Heart left ventricle (tissue), 16 donors: ENCODE measurements at regions of chr5 and their contacts with region 1.

Region 1: DNA sequence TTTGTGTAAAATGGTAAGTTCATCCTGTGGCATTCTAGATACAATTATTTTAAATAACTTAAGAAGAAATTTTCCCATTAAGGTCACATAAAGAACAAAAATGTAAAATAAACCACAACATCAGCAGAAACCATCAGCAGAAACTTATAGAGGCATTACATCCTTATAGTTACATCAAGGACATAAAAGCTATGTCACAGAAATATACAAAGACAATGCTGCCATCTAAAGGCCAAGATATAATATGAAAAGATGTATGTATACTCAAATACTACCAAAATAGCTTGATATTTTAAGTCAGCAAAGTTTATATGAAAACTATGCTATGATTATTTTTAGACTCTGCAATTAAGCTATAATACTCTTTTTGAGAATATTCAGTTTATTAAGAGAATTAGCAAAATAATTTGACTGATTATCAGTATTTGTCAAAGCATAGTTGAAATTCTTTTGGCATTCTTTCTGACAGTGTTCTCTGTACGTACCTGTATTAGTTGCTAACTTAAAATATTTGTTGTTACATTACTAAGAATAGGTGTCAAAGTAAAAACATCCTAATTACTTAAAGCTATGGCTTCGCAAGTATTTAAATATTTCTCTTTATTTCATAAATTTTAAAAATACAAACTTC is 36.2 kb downstream of the FBXL17 start:
- DNase-seq: no peak
- ATAC-seq: no peak
- H3K4me3 ChIP-seq: no peak overlapping the region
- H3K27ac ChIP-seq: no peak overlapping the region
- H3K4me1 ChIP-seq: peaks cover 0 to 7% (median 0%) of the 10 kb centered on the region in 12 donors
- H3K27me3 ChIP-seq: no peaks in the 10 kb centered on the region
- CTCF ChIP-seq: peak in 11 of 12 donors; percentile 8 to 56 (median 44)
- POLR2A ChIP-seq: no peak

Region 2: DNA sequence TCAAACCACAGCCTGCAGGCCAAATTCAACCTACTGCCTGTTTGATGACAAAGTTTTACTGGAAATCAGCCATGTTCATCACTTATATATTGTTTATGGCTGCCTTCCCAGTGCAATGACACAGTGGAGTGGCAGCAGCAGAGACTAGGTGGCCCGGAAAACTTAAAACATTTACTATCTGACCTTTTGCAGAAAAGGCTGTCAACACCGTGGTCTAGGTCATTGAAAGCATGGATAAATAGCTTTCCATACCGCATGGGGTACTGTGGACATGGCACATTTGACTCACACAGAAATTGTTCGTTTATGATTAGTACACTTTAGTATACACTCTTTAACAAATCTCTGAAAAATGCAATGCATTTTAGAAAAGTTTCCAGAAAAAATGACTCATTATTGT is 376.7 kb before region 1 on chr5:
- intact Hi-C with region 1: no loop called
- DNase-seq: no peak
- ATAC-seq: peak in 1 of 4 donors; percentile 74
- H3K4me3 ChIP-seq: no peak overlapping the region
- H3K27ac ChIP-seq: peak overlapping the region in 3 of 12 donors; percentile 11 to 45 (median 22)
- H3K4me1 ChIP-seq: peaks cover 0 to 6% (median 0%) of the 10 kb centered on the region in 12 donors
- H3K27me3 ChIP-seq: no peaks in the 10 kb centered on the region
- CTCF ChIP-seq: no peak
- POLR2A ChIP-seq: no peak

Region 3: GRCh38 chr5:108148715-108149139 is 196.9 kb before region 1 on chr5:
- intact Hi-C with region 1: loop called in 2 of 10 experiments (anchors 2 to 5 kb)
- DNase-seq: no peak
- ATAC-seq: peak; percentile 51 to 72 (median 64)
- H3K4me3 ChIP-seq: no peak overlapping the region
- H3K27ac ChIP-seq: no peak overlapping the region
- H3K4me1 ChIP-seq: peaks cover 0 to 7% (median 0%) of the 10 kb centered on the region in 12 donors
- H3K27me3 ChIP-seq: no peaks in the 10 kb centered on the region
- CTCF ChIP-seq: peak; percentile 17 to 60 (median 41)
- POLR2A ChIP-seq: no peak

Region 4: GRCh38 chr5:108260117-108260857 is 85.4 kb before region 1 on chr5:
- intact Hi-C with region 1: loop called (anchors 2 to 10 kb)
- DNase-seq: peak; percentile 55 to 73 (median 69)
- ATAC-seq: peak; percentile 71 to 94 (median 94)
- H3K4me3 ChIP-seq: peak overlapping the region in 5 of 12 donors; percentile 17 to 42 (median 23)
- H3K27ac ChIP-seq: no peak overlapping the region
- H3K4me1 ChIP-seq: peaks cover 0 to 21% (median 5%) of the 10 kb centered on the region in 12 donors
- H3K27me3 ChIP-seq: no peaks in the 10 kb centered on the region
- CTCF ChIP-seq: peak; percentile 87 to 98 (median 94)
- POLR2A ChIP-seq: no peak